Activated T-helper 2 cell treated with anti-CD3 and anti-CD28 coated beads, Interferon-gamma antibody, Interleukin-2, Interleukin-4, amounts not matched to agents 10 μg/mL and 5 μg/mL and 100 μg/mL, durations not matched to agents 14 hours and 24 hours and 36 hours (primary cell): ENCODE measurements at regions of chr3 and their contacts with region 1.

Region 1: DNA sequence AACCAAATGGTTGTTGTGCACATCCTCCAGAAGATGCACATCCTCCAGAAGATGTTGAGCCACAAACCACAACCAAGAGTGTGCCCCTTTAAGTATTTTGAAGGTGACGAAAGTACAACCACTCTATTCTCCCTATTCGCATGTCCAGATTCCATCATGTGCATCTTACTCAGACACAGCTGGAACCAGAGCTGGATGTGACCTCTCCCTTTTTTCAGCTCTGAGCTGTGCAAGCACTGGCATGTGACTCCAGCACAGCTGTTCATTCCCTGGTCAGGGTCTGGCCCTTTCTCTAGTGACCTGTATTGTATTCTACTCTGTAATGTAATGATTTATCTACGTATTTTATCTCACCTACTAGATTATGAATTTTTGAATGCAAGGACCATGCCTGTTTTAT is 29.3 kb upstream of the DLG1 start:
- DNase-seq: no peak
- H3K4me3 Mint-ChIP-seq: no peak overlapping the region
- H3K27ac Mint-ChIP-seq: no peak overlapping the region
- H3K4me1 Mint-ChIP-seq: peaks cover 12% of the 10 kb centered on the region
- H3K27me3 Mint-ChIP-seq: peaks cover 33% of the 10 kb centered on the region

Region 2: GRCh38 chr3:197292083-197292646 is 35.5 kb before region 1 on chr3:
- intact Hi-C with region 1: loop called (anchors 5 kb)
- DNase-seq: no peak
- H3K4me3 Mint-ChIP-seq: no peak overlapping the region
- H3K27ac Mint-ChIP-seq: no peak overlapping the region
- H3K4me1 Mint-ChIP-seq: peaks cover 52% of the 10 kb centered on the region
- H3K27me3 Mint-ChIP-seq: no peaks in the 10 kb centered on the region

Region 3: GRCh38 chr3:197305854-197306253 is 21.8 kb before region 1 on chr3:
- intact Hi-C with region 1: loop called (anchors 1 kb)
- DNase-seq: no peak
- H3K4me3 Mint-ChIP-seq: no peak overlapping the region
- H3K27ac Mint-ChIP-seq: peak overlapping the region; percentile 19
- H3K4me1 Mint-ChIP-seq: peaks cover 28% of the 10 kb centered on the region
- H3K27me3 Mint-ChIP-seq: peaks cover 20% of the 10 kb centered on the region

Region 4: DNA sequence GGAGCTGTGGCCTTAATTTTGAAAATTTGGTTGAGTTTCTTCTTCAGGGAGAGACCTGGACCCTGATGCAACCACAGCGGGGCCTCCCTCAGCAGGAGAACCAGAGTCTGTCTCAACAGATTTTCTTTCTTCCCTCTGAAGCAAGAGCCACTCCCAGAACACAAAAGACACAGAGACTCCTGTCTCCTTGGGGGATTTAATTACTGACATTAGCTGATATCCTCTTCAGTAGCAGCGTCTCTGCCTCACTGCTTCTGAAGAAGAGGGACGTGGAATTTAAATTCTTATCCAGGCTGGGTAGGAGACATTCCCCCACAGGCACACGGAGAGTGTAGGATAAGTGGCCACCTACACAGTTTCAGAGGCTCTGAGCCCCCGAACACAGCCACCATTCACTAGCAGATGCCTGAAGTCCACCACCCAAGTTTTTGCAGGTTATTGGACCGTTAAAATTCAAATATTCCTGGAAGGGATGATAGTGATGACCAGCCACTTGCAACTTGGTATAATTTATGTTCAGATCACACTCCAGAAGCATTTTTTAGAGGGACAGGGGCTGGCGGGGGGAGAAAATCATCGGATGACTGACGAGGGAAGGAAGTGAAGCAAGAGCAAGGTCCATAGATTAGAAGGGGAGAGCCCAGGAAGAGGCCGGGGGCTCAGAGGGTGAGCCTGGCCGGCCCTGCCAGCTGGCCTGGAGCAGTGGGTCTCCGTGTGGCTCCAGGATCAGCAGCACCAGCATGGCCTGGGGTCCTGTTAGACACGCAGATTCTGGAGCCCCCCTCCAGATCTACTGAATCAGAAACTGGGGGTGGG is 118.4 kb after region 1 on chr3:
- intact Hi-C with region 1: no loop called
- DNase-seq: no peak
- H3K4me3 Mint-ChIP-seq: no peak overlapping the region
- H3K27ac Mint-ChIP-seq: no peak overlapping the region
- H3K4me1 Mint-ChIP-seq: peaks cover 6% of the 10 kb centered on the region
- H3K27me3 Mint-ChIP-seq: peaks cover 22% of the 10 kb centered on the region